ENCODE measurements at regions of chr1 and their contacts with region 1.

Region 1: DNA sequence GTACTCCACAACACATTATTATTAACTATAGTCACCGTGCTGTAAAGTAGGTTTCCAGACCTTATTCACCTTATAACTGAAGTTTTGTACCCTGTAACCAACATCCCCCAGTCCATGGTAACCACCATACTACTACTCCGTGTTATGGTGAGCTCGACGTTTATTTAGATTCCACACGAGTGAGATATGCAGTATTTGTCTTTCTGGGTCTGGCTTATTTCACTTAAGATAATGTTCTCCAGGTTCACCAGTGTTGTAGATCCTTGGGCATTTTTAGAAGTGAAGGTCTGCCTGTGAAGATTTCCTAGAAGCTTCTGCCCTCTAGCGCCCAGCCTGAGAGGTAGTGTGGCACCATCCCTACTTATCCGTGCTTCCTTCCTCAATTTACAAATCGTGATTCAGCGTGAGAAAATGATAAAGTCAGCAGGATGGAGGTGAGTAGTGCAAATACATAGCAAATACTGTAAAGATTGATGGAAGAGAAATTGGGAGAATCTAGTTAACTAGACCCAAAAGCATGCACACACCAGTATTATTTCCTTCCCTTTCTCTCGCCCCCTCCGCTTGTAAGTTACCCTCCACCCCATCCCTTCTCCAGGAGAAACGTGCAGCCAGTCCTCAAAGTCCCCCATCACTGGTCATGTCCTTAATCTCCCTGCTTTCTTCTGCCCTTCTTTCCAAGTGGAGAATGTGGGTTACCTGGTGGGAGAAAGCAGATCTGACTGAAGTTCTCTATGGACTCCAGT is 36.0 kb upstream of the DISC1 start:
- DNase-seq: no peak
- H3K4me3 ChIP-seq: no peak overlapping the region
- CTCF ChIP-seq: no peak
- POLR2A ChIP-seq: no peak

Region 2: GRCh38 chr1:231357831-231358354 is 232.7 kb before region 1 on chr1:
- intact Hi-C with region 1: loop called (anchors 5 kb)
- DNase-seq: peak in 1 of 2 donors; percentile 46
- H3K4me3 ChIP-seq: no peak overlapping the region
- CTCF ChIP-seq: no peak
- POLR2A ChIP-seq: no peak

Region 3: GRCh38 chr1:231460614-231461013 is 130.0 kb before region 1 on chr1:
- intact Hi-C with region 1: no loop called
- DNase-seq: peak in 1 of 2 donors; percentile 16
- H3K4me3 ChIP-seq: no peak overlapping the region
- CTCF ChIP-seq: no peak
- POLR2A ChIP-seq: no peak

Region 4: GRCh38 chr1:231663211-231663792 is 72.7 kb after region 1 on chr1:
- intact Hi-C with region 1: no loop called
- DNase-seq: no peak
- H3K4me3 ChIP-seq: no peak overlapping the region
- CTCF ChIP-seq: no peak
- POLR2A ChIP-seq: no peak

Region 5: GRCh38 chr1:232316864-232317263 is 726.2 kb after region 1 on chr1:
- intact Hi-C with region 1: no loop called
- DNase-seq: no peak
- H3K4me3 ChIP-seq: no peak overlapping the region
- CTCF ChIP-seq: no peak
- POLR2A ChIP-seq: no peak